SK-MEL-5 (cell line): ENCODE measurements at regions of chr12 and their contacts with region 1.

Region 1: DNA sequence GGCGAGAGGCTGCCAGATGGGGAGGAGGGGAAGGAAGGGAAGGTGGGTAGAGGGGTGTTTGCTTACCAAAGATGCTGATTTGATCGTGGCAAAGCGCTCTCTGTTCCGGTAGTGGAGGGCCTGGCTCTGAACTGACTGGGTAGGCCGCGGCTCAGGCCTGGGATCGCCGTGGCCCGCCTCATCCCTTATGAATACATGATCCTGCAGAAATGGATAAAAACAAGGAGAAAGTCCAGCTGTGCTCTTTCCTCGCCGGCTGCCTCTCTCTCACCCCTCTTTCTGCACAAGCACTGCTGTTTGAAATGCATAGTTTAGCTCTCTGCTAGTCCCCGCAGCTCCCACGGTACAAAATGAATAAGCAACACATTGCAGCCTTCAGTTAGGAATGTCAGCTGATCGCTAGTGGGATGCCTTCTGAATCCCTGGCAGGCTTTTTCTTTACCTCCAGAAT is 53.8 kb downstream of the PEBP1 start:
- DNase-seq: peak; percentile 64

Region 2: GRCh38 chr12:118372541-118373495 is 183.1 kb after region 1 on chr12 and contains the start of gene TAOK3:
- in situ Hi-C with region 1: loop called (anchors 10 kb)
- DNase-seq: peak; percentile 99
- total RNA-seq, gene TAOK3: 36.5 and 39.0 TPM in 2 replicates